ENCODE measurements at regions of chr3 and their contacts with region 1.

Region 1: DNA sequence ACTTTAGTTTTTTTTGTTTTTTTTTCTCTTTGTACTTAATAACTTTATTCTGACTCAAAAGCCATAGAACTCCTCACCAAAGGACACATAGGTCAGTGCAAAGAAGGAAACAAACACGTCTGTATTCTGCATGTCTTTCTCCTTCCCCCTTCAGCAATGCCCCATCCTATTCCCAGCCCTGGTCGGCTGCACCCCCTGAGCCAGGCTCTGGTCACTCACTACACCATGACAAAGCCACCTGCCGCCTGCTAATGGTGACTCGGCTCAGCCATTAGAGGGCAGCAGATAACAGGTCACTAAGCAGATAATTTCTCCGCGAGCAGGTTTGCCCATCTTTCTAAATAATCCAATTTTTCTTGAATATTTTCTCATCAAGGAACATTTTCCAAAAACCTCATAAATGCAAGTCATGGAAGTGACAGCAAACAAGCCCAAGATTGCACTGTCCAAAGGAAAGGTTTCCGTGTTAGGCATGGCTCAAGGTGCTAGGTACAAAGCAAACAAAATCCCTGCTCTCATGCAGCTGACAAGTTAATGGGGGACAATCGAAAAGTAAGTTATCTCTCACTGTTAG is 37.8 kb downstream of the TM4SF4 start:
- DNase-seq: peak in 5 of 14 experiments; percentile 3 to 48 (median 34)
- ATAC-seq: no peak
- H3K4me3 ChIP-seq: no peak overlapping the region
- H3K4me3 Mint-ChIP-seq: no peak overlapping the region
- H3K27ac ChIP-seq: no peak overlapping the region
- H3K27ac Mint-ChIP-seq: no peak overlapping the region
- H3K4me1 ChIP-seq: no peaks in the 10 kb centered on the region
- H3K4me1 Mint-ChIP-seq: peaks cover 11% of the 10 kb centered on the region
- H3K27me3 ChIP-seq: peaks cover 0 to 9% of the 10 kb centered on the region in 2 experiments
- H3K27me3 Mint-ChIP-seq: peaks cover 32% of the 10 kb centered on the region
- CTCF ChIP-seq: peak; percentile 42

Region 2: DNA sequence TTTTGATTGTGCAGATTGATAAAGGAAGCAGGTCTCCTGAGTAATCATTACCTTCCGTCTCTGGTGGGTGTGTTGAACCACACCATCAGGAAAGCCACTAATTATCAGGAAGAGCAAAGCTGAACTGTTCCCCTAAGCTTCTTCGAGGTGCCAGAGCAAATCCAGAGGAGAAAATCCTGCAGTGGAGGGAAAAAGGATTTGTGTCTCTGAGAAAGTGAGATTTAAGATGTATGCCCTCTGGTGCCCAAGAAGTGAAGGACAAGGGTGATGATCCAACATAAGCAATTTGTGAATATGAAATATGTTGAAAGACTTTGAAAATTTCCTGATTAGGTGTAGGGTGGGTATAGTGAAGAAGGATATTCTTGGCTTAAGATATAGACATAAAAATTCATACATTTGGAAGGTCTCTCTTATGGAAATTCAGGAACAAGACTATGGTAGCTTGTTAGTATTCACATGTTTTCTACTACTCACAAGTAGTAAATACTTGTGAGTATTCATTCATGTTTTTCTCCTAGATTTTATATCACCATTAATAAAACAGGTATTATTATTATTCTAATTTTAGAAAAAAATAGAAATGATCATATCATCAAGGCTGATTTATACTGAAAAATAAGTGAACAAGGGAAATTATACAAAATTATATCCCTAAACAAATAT is 205.2 kb after region 1 on chr3:
- CTCF ChIA-PET with region 1: no interaction called
- POLR2A ChIA-PET with region 1: no interaction called
- intact Hi-C with region 1: loop called in 1 of 2 experiments (anchors 10 kb)
- DNase-seq: peak in 4 of 14 experiments; percentile 15 to 45 (median 34)
- ATAC-seq: no peak
- H3K4me3 ChIP-seq: no peak overlapping the region
- H3K4me3 Mint-ChIP-seq: no peak overlapping the region
- H3K27ac ChIP-seq: no peak overlapping the region
- H3K27ac Mint-ChIP-seq: no peak overlapping the region
- H3K4me1 ChIP-seq: no peaks in the 10 kb centered on the region
- H3K4me1 Mint-ChIP-seq: no peaks in the 10 kb centered on the region
- H3K27me3 ChIP-seq: no peaks in the 10 kb centered on the region
- H3K27me3 Mint-ChIP-seq: no peaks in the 10 kb centered on the region
- CTCF ChIP-seq: peak; percentile 39

Region 3: DNA sequence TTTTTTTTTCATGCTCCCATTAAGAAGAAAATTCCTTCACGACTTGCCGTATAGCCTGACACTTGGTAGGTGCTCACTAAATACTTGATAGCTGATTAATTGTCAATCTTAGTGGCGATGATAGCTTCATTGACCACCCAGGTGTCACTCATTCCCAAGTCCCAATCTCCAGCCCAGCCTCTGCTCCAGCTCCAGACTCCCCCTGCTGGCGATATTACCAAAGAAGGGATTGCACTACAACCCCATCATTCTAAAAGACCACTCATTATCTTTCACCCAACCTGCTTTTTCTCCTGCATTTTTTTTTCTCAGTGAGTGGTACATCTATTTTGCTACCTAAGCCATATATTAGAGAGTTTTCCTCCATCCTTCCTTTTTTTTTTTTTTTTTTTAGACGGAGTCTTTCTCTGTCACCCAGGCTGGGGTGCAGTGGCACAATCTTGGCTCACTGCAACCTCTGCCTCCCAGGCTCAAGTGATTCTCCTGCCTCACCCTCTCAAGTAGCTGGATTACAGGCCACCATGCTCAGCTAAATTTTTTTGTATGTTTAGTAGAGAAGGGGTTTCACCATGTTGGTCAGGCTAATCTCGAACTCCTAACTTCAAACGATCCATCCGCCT is 259.5 kb after region 1 on chr3:
- CTCF ChIA-PET with region 1: no interaction called
- POLR2A ChIA-PET with region 1: no interaction called
- intact Hi-C with region 1: loop called in 1 of 2 experiments (anchors 5 kb)
- DNase-seq: peak in 10 of 14 experiments; percentile 1 to 58 (median 10)
- ATAC-seq: no peak
- H3K4me3 ChIP-seq: no peak overlapping the region
- H3K4me3 Mint-ChIP-seq: no peak overlapping the region
- H3K27ac ChIP-seq: no peak overlapping the region
- H3K27ac Mint-ChIP-seq: no peak overlapping the region
- H3K4me1 ChIP-seq: no peaks in the 10 kb centered on the region
- H3K4me1 Mint-ChIP-seq: no peaks in the 10 kb centered on the region
- H3K27me3 ChIP-seq: peaks cover 0 to 5% of the 10 kb centered on the region in 2 experiments
- H3K27me3 Mint-ChIP-seq: peaks cover 19% of the 10 kb centered on the region
- CTCF ChIP-seq: peak; percentile 68

Measured in CD4-positive, alpha-beta T cell (primary cell).